ENCODE measurements at regions of chr19 and their contacts with region 1.

Region 1: DNA sequence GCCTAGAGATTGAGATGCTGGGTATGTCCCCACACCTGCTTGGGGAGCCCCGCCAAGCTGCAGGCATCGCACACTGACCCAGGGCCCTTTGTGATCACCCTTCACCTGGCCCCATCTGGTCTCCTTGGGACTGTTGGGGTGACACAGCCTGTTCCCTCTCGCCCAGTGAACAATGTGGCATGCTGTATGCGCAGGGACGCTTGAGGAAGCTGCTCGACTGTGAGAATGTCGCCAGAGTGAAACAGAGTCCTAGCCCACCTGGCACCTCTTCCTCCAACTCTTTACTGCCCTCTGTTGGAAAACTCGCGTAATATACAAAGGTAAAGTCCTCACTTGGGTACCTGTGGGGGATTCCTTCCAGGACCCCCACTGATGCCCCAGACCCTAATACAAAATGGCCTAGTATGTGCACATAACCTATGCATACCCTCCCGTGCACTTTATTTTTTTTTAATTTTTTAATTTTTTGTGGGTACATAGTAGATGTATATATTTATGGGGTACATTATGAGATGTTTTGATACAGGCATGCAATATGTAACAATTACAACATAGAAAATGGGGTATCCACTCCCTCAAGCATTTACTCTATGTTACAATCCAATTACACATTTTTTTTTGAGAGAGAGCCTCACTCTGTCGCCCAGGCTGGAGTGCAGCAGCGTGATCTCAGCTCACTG is 9.0 kb downstream of the BLOC1S3 start:
- DNase-seq: peak; percentile 46
- ATAC-seq: peak; percentile 90
- H3K4me3 Mint-ChIP-seq: no peak overlapping the region
- H3K27ac Mint-ChIP-seq: no peak overlapping the region
- H3K4me1 Mint-ChIP-seq: no peaks in the 10 kb centered on the region
- H3K27me3 Mint-ChIP-seq: peaks cover 9% of the 10 kb centered on the region; the same call in 1 of the 2 replicates
- CTCF ChIP-seq: peak; percentile 75

Region 2: DNA sequence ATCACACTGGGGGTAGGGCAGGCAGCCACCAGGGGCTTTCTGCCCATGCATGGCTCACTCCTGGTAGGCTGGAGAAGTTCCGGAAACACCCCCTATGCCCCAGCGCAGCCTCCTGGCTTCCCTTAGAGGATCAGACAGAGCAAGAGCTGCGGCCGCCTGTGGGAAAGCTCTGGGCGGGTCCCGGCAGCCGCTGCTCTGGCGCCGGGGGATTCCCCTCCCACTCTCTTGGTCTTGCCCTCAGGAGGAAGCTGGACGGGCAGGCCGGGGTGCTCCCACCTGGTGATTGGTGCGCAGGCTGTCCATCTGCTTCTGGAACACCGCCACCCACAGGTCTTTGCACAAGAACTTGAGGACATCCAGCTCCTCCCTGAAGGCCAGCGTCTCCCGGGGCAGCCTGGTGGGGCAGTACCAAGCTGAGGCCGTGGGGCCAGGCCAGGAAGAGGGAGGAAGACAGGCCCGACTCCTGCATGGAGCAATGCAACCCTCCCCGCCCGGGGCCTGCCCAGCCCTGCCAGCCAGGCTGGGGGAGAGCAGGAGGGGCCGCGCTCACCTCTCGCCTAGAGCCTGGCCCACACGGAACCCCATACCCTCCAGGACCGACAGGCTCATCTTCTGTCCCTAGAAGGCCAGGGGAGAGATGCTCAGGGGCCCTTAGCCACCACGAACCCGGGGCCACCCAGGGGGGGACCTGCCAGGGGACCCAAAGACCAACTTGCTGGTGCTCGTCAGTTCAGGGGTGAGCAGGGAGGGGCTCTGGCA is 22.8 kb before region 1 on chr19:
- CTCF ChIA-PET with region 1: interaction called, 21 read pairs
- POLR2A ChIA-PET with region 1: interaction called, 3 read pairs
- DNase-seq: peak; percentile 66
- ATAC-seq: peak; percentile 67
- H3K4me3 Mint-ChIP-seq: no peak overlapping the region
- H3K27ac Mint-ChIP-seq: no peak overlapping the region
- H3K4me1 Mint-ChIP-seq: peaks cover 12% of the 10 kb centered on the region
- H3K27me3 Mint-ChIP-seq: peaks cover 4% of the 10 kb centered on the region
- CTCF ChIP-seq: no peak

Region 3: DNA sequence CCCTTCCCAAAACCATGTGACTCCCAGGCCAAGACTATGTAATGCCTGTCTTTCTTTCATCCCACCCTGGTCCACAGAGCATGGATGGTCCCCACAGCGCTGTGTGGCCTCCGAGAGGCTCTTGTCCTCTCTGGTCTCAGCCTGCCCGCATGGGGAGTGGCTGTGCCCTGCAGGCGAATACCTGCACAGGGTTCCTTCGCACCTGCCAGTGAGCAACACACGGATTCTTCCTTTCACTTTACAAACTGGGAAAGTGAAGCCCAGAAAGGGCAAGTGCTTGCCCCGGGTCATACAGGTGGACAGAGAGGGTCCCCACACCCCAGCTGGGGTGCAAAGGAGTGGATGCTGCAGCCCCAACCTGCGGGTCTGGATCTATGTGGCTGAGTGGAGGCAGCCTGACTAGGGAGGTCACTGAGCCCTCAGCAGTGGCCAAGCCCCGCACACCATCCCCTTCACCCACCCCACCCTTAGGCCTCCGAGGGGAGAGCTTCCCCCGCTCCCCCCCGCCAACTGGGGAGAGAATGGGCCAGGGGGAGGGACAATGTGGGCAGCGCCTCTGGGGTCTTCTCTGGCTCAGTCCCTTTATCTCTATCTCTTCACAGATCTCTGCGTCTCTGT is 62.8 kb after region 1 on chr19:
- CTCF ChIA-PET with region 1: interaction called, 15 read pairs
- POLR2A ChIA-PET with region 1: no interaction called
- DNase-seq: no peak
- ATAC-seq: no peak
- H3K4me3 Mint-ChIP-seq: peak overlapping the region; percentile 89
- H3K27ac Mint-ChIP-seq: no peak overlapping the region
- H3K4me1 Mint-ChIP-seq: peaks cover 22% of the 10 kb centered on the region
- H3K27me3 Mint-ChIP-seq: peaks cover 25% of the 10 kb centered on the region
- CTCF ChIP-seq: no peak

Measured in WTC11 (cell line).